Activated naive CD4-positive, alpha-beta T cell treated with anti-CD3 and anti-CD28 coated beads for 36 hours (primary cell): ENCODE measurements at regions of chr10 and their contacts with region 1.

Region 1: GRCh38 chr10:24617771-24618391 is 105.8 kb downstream of the ARHGAP21 start:
- DNase-seq: peak; percentile 70
- H3K4me3 Mint-ChIP-seq: peak overlapping the region; percentile 3
- H3K27ac Mint-ChIP-seq: no peak overlapping the region
- H3K4me1 Mint-ChIP-seq: peaks cover 29% of the 10 kb centered on the region
- H3K27me3 Mint-ChIP-seq: no peaks in the 10 kb centered on the region

Region 2: DNA sequence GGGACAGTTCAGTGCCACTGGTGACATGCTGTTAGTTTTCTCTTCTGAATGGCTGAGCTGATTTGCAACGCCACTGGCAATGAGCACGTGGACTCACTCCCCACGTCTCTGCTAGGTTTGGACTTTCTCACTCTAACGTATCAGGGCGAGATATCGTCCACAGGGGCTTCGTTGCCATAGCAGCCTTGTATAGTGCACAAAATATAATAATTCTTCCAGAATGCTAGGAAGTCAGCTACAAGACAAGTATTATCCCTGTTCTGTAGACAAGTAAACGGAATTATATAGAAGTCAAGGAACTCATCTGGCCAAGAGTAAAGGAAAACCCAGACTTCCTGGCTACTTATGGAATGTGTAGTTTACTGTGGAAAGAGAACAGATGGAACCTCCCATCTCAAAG is 121.0 kb before region 1 on chr10:
- CTCF ChIA-PET with region 1: no interaction called
- intact Hi-C with region 1: no loop called
- DNase-seq: no peak
- H3K4me3 Mint-ChIP-seq: no peak overlapping the region
- H3K27ac Mint-ChIP-seq: no peak overlapping the region
- H3K4me1 Mint-ChIP-seq: no peaks in the 10 kb centered on the region
- H3K27me3 Mint-ChIP-seq: no peaks in the 10 kb centered on the region

Region 3: GRCh38 chr10:25080880-25081581 is 463.1 kb after region 1 on chr10:
- CTCF ChIA-PET with region 1: interaction called, 19 read pairs
- intact Hi-C with region 1: loop called (anchors 1 kb)
- DNase-seq: peak; percentile 77
- H3K4me3 Mint-ChIP-seq: no peak overlapping the region
- H3K27ac Mint-ChIP-seq: no peak overlapping the region
- H3K4me1 Mint-ChIP-seq: peaks cover 3% of the 10 kb centered on the region
- H3K27me3 Mint-ChIP-seq: peaks cover 8% of the 10 kb centered on the region

Region 4: DNA sequence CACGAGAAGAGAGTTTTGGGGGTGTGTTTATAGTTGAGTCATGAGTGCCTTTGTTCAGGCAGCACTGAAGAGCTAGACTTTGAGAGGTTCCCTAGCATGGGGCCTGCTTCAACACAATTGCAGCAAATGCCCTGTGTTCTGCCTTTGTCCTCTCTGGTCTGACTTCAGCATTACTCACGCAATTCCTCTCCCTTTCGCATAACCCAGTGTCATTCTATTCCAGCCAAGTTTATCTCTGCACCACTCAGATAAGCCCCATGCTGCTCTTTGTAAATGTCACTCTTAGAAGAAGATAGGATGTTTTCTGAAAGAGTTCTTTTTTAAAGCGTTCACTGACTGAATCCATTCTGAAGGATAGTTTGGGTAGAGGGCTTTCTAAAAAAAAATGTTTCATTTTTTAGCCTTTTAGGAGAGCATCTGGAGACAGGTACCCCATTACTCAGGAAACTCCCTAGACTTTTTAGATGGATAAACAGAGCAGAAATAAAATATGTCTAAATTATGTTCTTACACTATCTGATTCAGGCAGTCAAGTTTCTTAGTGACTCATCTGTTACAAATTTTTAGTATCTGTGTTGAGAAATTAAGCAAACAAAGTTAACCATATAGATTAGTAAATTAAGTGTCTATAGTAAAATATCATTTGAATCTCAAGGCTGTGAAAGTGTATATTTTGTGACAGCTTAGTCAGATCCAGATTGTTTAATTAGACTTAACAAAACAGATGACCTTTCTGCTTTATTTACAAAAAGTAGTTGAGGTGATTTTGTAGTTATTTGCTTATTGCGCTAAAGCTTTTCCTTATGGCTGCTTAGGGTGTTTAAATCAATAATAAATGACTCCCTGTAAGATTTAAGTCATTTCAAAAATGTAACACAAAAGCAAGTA is 875.5 kb after region 1 on chr10:
- CTCF ChIA-PET with region 1: no interaction called
- intact Hi-C with region 1: no loop called
- DNase-seq: no peak
- H3K4me3 Mint-ChIP-seq: no peak overlapping the region
- H3K27ac Mint-ChIP-seq: no peak overlapping the region
- H3K4me1 Mint-ChIP-seq: no peaks in the 10 kb centered on the region
- H3K27me3 Mint-ChIP-seq: no peaks in the 10 kb centered on the region